Vagina (tissue), 2 donors: ENCODE measurements at regions of chr5 and their contacts with region 1.

Region 1: GRCh38 chr5:84741056-84741455 is 356.4 kb upstream of the EDIL3 start:
- DNase-seq: no peak
- H3K4me3 ChIP-seq: no peak overlapping the region
- H3K27ac ChIP-seq: no peak overlapping the region
- H3K4me1 ChIP-seq: no peaks in the 10 kb centered on the region
- H3K27me3 ChIP-seq: no peaks in the 10 kb centered on the region
- CTCF ChIP-seq: no peak
- POLR2A ChIP-seq: no peak

Region 2: DNA sequence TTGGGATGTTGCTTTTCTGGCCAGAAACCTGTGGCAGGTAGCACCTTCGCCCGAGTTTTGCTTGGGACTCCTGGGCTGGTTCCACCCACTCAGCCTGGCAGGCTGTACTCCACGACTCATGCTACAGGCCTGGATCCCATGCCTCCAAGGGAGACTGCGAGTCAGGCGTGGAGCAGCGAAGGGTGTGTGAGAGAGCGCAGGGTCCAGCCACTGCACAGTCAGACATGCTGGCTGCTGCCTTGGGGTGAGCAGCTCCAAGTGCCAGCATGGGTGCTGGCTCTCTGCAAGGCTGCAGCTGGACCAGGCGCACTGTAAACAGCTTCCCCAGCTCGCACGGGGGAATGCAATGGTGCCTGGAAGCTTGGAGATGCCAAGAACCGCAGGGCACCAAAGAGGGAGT is 106.8 kb before region 1 on chr5:
- intact Hi-C with region 1: no loop called
- DNase-seq: no peak
- H3K4me3 ChIP-seq: no peak overlapping the region
- H3K27ac ChIP-seq: no peak overlapping the region
- H3K4me1 ChIP-seq: no peaks in the 10 kb centered on the region
- H3K27me3 ChIP-seq: no peaks in the 10 kb centered on the region
- CTCF ChIP-seq: no peak
- POLR2A ChIP-seq: no peak

Region 3: DNA sequence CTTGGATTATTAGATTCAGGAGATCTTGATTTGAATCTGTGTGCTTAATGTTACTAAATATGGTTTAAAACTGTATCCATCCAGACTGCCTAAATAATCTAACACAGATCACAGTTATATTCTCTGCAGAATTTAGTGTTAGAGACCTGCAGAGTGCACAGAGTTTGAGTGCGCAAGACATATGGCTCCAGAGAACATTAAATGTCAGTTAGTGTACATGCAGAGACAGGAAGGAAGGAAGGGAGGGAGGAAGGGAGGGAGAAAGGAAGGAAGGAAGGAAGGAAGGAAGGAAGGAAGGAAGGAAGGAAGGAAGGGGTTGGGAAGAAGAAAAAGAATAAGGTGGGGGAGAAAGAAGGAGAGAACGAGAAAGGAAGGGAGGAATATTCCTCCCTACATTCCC is 1666.7 kb after region 1 on chr5:
- intact Hi-C with region 1: loop called (anchors 5 kb)
- DNase-seq: no peak
- H3K4me3 ChIP-seq: no peak overlapping the region
- H3K27ac ChIP-seq: no peak overlapping the region
- H3K4me1 ChIP-seq: no peaks in the 10 kb centered on the region
- H3K27me3 ChIP-seq: no peaks in the 10 kb centered on the region
- CTCF ChIP-seq: no peak
- POLR2A ChIP-seq: no peak